Prostate gland (tissue), 2 donors: ENCODE measurements at regions of chr5 and their contacts with region 1.

Region 1: GRCh38 chr5:111757355-111758283 is 625 bp upstream of the NREP start:
- DNase-seq: peak; percentile 85
- H3K4me3 ChIP-seq: peak overlapping the region; percentile 45 to 60
- H3K27ac ChIP-seq: peak overlapping the region; percentile 76 to 83
- H3K4me1 ChIP-seq: no peaks in the 10 kb centered on the region
- H3K27me3 ChIP-seq: no peaks in the 10 kb centered on the region
- CTCF ChIP-seq: peak in 2 of 4 experiments; percentile 48 to 49
- POLR2A ChIP-seq: peak; percentile 12

Region 2: GRCh38 chr5:111512375-111513130 is 245.1 kb before region 1 on chr5 and contains the start of gene STARD4:
- intact Hi-C with region 1: loop called (anchors 5 kb)
- DNase-seq: peak; percentile 90
- H3K4me3 ChIP-seq: peak within 1 kb of the TSS; percentile 60 to 61
- H3K27ac ChIP-seq: peak within 1 kb of the TSS; percentile 84 to 87
- H3K4me1 ChIP-seq: peaks cover 7% of the 10 kb centered on the region
- H3K27me3 ChIP-seq: no peaks in the 10 kb centered on the region
- CTCF ChIP-seq: peak in 1 of 4 experiments; percentile 0
- POLR2A ChIP-seq: peak; percentile 64
- total RNA-seq, gene STARD4: 12.1 to 13.4 TPM

Region 3: GRCh38 chr5:111550279-111551020 is 207.2 kb before region 1 on chr5:
- intact Hi-C with region 1: loop called (anchors 10 kb)
- DNase-seq: peak; percentile 84
- H3K4me3 ChIP-seq: no peak overlapping the region
- H3K27ac ChIP-seq: no peak overlapping the region
- H3K4me1 ChIP-seq: no peaks in the 10 kb centered on the region
- H3K27me3 ChIP-seq: no peaks in the 10 kb centered on the region
- CTCF ChIP-seq: peak in 3 of 4 experiments; percentile 63 to 74 (median 70)
- POLR2A ChIP-seq: no peak

Region 4: DNA sequence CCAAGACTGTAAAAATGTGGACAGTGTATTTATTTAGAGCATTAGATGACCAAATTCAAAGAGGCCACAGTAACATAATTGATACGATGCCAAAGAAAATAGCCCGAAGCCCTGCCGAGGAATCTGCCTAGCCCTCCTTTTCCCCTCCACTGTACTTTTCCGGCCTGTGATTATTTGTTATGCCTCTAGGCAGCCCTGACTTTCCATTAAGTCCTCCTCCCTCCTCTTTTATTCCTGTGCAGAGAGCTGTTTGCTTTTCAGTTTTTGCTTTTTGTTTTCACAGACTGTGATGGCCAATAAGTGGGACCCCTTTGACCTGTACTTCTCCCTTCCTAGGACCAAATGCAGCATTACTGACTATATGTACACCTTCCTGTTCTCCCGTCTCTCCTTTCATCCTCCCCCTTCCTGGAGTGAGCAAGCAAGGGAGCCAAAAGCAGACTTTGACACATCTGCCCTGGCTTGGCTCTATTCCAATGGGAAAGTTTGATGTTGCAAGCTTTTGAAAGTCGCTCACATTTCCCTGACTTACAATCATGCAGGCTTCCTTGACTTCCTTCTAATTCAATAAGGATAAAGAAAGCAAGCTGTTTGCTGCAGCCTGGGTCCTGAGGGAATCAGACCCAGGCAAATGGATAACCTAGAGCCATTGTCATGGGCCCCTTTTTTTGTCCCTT is 76.7 kb before region 1 on chr5:
- intact Hi-C with region 1: loop called (anchors 10 kb)
- DNase-seq: peak; percentile 76
- H3K4me3 ChIP-seq: no peak overlapping the region
- H3K27ac ChIP-seq: peak overlapping the region in 1 of 2 donors; percentile 25
- H3K4me1 ChIP-seq: no peaks in the 10 kb centered on the region
- H3K27me3 ChIP-seq: no peaks in the 10 kb centered on the region
- CTCF ChIP-seq: no peak
- POLR2A ChIP-seq: no peak

Region 5: GRCh38 chr5:111742177-111742994 is 15.2 kb before region 1 on chr5:
- intact Hi-C with region 1: loop called (anchors 2 kb)
- DNase-seq: no peak
- H3K4me3 ChIP-seq: no peak overlapping the region
- H3K27ac ChIP-seq: no peak overlapping the region
- H3K4me1 ChIP-seq: peaks cover 4% of the 10 kb centered on the region
- H3K27me3 ChIP-seq: no peaks in the 10 kb centered on the region
- CTCF ChIP-seq: no peak
- POLR2A ChIP-seq: no peak

Region 6: DNA sequence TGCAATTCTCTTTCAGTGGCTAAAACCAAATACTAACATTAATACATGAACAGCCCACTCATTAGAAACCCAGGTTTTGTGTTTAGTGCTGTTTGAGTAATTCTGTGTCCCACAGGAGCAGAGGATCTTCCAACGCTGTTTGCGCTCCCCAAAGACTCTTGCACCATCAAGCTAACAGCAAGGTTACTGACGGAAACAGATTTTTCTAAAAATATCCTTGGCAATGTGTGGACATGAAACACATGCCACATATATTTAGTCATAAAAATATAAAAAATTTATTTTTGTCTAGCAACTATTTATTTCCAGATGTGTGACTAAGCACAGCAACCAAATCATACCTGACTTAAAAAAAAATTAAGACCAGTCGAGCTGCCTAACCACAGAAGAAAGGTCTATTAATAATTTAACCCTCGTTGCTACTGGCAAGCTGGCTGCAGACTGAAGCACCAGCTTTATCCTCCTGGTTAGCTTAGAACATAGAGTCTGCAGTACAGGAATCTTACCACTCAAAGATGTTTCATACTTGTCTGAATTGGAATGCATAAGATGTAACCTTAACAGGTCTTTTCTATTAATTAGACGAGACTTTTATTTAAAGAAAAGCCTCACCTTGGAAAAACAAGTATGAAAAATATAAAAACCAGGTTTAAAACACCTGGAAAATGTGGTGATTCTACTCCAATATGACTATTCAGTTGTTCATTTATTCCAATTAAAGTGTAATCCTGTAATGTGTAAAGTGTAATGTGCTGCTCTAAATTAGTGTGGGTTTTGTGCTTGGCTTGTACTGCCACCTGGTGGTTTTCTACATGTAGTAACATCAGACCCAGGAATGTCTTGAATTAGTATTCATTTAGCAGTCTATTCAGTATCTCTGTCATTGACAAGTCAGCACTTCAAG is 389.0 kb after region 1 on chr5:
- intact Hi-C with region 1: loop called (anchors 10 kb)
- DNase-seq: peak; percentile 66
- H3K4me3 ChIP-seq: no peak overlapping the region
- H3K27ac ChIP-seq: no peak overlapping the region
- H3K4me1 ChIP-seq: no peaks in the 10 kb centered on the region
- H3K27me3 ChIP-seq: no peaks in the 10 kb centered on the region
- CTCF ChIP-seq: peak; percentile 69 to 90 (median 84)
- POLR2A ChIP-seq: no peak